Heart right ventricle (tissue), 16 donors: ENCODE measurements at regions of chr20 and their contacts with region 1.

Region 1: GRCh38 chr20:62937366-62938104 is 412 bp upstream of the GID8 start:
- DNase-seq: peak; percentile 97 to 98
- ATAC-seq: peak; percentile 96 to 98 (median 98)
- H3K4me3 ChIP-seq: peak overlapping the region; percentile 82 to 97 (median 93)
- H3K27ac ChIP-seq: peak overlapping the region; percentile 84 to 99 (median 94)
- H3K4me1 ChIP-seq: peaks cover 21 to 69% (median 46%) of the 10 kb centered on the region in 9 donors
- H3K27me3 ChIP-seq: no peaks in the 10 kb centered on the region
- CTCF ChIP-seq: peak in 1 of 9 donors; percentile 8

Region 2: GRCh38 chr20:62449951-62450691 is 487.4 kb before region 1 on chr20:
- intact Hi-C with region 1: no loop called
- DNase-seq: peak; percentile 17 to 44
- ATAC-seq: peak; percentile 57 to 73 (median 61)
- H3K4me3 ChIP-seq: no peak overlapping the region
- H3K27ac ChIP-seq: no peak overlapping the region
- H3K4me1 ChIP-seq: peaks cover 0 to 3% (median 0%) of the 10 kb centered on the region in 9 donors
- H3K27me3 ChIP-seq: peaks cover 0 to 60% (median 27%) of the 10 kb centered on the region in 7 donors
- CTCF ChIP-seq: no peak

Region 3: GRCh38 chr20:62496568-62497218 is 440.8 kb before region 1 on chr20:
- intact Hi-C with region 1: no loop called
- DNase-seq: peak in 1 of 2 donors; percentile 48
- ATAC-seq: peak in 4 of 8 donors; percentile 7 to 23 (median 8)
- H3K4me3 ChIP-seq: no peak overlapping the region
- H3K27ac ChIP-seq: no peak overlapping the region
- H3K4me1 ChIP-seq: peaks cover 5 to 49% (median 28%) of the 10 kb centered on the region in 9 donors
- H3K27me3 ChIP-seq: peaks cover 0 to 7% (median 0%) of the 10 kb centered on the region in 7 donors
- CTCF ChIP-seq: peak; percentile 60 to 74 (median 71)

Region 4: DNA sequence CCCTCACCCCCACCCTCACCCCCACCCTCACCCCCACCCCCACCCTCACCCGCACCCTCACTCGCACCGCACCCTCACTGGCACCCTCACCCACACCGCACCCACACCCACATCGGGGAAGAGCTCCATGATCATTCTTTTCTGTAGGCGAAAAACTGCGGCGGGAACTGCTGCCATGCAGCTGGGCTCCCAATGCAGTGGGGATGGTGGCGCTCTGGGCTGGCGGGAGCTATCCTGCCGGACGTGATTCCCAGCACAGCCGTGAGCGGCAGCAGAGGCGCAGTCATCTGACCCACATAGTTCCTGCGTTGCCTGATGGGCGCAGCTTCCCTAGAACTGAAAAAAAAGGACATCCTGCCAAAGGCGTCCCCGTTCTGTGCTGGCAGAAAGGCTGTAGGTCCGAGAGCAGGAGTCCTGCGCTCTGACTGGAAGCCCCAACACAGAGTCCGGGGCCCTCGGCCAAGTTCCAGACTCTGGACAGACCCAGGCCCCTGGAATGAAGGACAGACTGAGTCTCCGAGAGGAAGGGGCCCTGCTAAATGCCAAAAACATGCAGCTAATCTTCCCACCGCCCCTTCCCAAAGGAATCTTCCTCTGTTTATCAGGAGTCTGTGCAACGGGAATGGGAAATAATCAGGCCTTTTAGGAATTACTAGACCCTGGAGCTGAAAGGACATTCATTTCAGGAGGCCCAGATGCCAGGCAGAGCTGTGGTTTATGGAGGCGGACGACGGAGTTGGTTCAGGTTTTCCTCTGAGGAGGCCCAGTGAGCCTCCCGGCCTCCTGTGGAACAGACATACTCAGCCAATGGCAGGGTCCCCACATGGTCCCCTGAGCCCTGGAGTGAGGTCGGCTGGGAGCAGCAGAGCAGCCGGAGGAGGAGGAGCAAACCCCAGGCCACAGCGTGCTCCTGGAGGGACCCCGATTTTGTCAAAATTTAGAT is 61.8 kb before region 1 on chr20:
- intact Hi-C with region 1: loop called in 1 of 10 experiments (anchors 10 kb)
- DNase-seq: peak; percentile 79 to 80
- ATAC-seq: peak; percentile 77 to 93 (median 85)
- H3K4me3 ChIP-seq: peak overlapping the region in 5 of 10 donors; percentile 8 to 35 (median 21)
- H3K27ac ChIP-seq: peak overlapping the region; percentile 7 to 90 (median 76)
- H3K4me1 ChIP-seq: peaks cover 14 to 33% (median 24%) of the 10 kb centered on the region in 9 donors
- H3K27me3 ChIP-seq: peaks cover 0 to 6% (median 0%) of the 10 kb centered on the region in 7 donors
- CTCF ChIP-seq: peak in 7 of 9 donors; percentile 29 to 62 (median 41)

Region 5: GRCh38 chr20:62900052-62900691 is 37.4 kb before region 1 on chr20:
- intact Hi-C with region 1: loop called in 1 of 10 experiments (anchors 5 kb)
- DNase-seq: peak; percentile 66 to 72
- ATAC-seq: peak; percentile 87 to 95 (median 91)
- H3K4me3 ChIP-seq: no peak overlapping the region
- H3K27ac ChIP-seq: no peak overlapping the region
- H3K4me1 ChIP-seq: peaks cover 7 to 36% (median 17%) of the 10 kb centered on the region in 9 donors
- H3K27me3 ChIP-seq: no peaks in the 10 kb centered on the region
- CTCF ChIP-seq: peak; percentile 80 to 93 (median 89)

Region 6: DNA sequence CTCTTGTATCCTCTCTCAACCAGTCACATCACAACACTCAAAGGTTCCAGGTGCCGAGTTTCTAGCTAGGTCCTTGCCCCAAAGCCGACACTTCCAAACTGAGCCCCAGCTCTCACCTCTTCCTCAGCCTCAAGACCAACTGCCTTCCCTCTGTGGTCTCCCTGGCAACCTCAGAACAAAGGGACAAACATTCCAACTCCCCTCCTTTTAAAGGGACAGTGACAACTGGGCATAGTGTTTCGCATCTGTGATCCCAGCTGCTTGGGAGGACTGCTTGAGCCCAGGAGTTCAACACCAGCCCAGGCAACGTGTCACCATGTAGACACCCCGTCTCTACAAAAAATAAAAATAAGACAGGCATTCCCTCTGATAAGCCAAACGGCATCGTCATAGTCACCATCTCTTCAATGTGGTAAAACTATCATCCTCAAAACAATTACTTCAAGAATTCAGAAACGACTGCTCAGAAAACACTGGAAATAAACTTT is 22.5 kb before region 1 on chr20:
- intact Hi-C with region 1: no loop called
- DNase-seq: peak in 1 of 2 donors; percentile 58
- ATAC-seq: peak in 7 of 8 donors; percentile 37 to 82 (median 80)
- H3K4me3 ChIP-seq: peak overlapping the region in 4 of 10 donors; percentile 15 to 25 (median 19)
- H3K27ac ChIP-seq: no peak overlapping the region
- H3K4me1 ChIP-seq: peaks cover 36 to 84% (median 75%) of the 10 kb centered on the region in 9 donors
- H3K27me3 ChIP-seq: no peaks in the 10 kb centered on the region
- CTCF ChIP-seq: no peak

Region 7: GRCh38 chr20:62926239-62927104 is 11.1 kb before region 1 on chr20 and contains the start of gene DIDO1:
- intact Hi-C with region 1: loop called in 2 of 10 experiments (anchors 1 kb)
- DNase-seq: peak; percentile 84 to 92
- ATAC-seq: peak; percentile 86 to 94 (median 91)
- H3K4me3 ChIP-seq: peak within 1 kb of the TSS; percentile 67 to 99 (median 98)
- H3K27ac ChIP-seq: peak within 1 kb of the TSS; percentile 89 to 99 (median 98)
- H3K4me1 ChIP-seq: peaks cover 24 to 78% (median 69%) of the 10 kb centered on the region in 9 donors
- H3K27me3 ChIP-seq: no peaks in the 10 kb centered on the region
- CTCF ChIP-seq: peak; percentile 54 to 94 (median 85)
- total RNA-seq, gene DIDO1: 31.4 to 44.6 (median 37.6) TPM

Region 8: GRCh38 chr20:63071541-63072181 is 134.1 kb after region 1 on chr20:
- intact Hi-C with region 1: no loop called
- DNase-seq: peak in 1 of 2 donors; percentile 4
- ATAC-seq: no peak
- H3K4me3 ChIP-seq: no peak overlapping the region
- H3K27ac ChIP-seq: no peak overlapping the region
- H3K4me1 ChIP-seq: peaks cover 0 to 10% (median 7%) of the 10 kb centered on the region in 9 donors
- H3K27me3 ChIP-seq: peaks cover 12 to 68% (median 59%) of the 10 kb centered on the region in 7 donors
- CTCF ChIP-seq: no peak